ENCODE measurements at regions of chr1 and their contacts with region 1.

Region 1: GRCh38 chr1:181105134-181106021 is 16.9 kb downstream of the IER5 start:
- DNase-seq: peak; percentile 80 to 96 (median 94)
- ATAC-seq: peak; percentile 85
- H3K4me3 ChIP-seq: peak overlapping the region; percentile 61 to 76
- H3K4me3 Mint-ChIP-seq: peak overlapping the region; percentile 90
- H3K27ac ChIP-seq: peak overlapping the region; percentile 52 to 74
- H3K27ac Mint-ChIP-seq: peak overlapping the region; percentile 91
- H3K4me1 ChIP-seq: peaks cover 25% of the 10 kb centered on the region
- H3K4me1 Mint-ChIP-seq: peaks cover 40% of the 10 kb centered on the region
- H3K27me3 ChIP-seq: no peaks in the 10 kb centered on the region
- H3K27me3 Mint-ChIP-seq: no peaks in the 10 kb centered on the region
- CTCF ChIP-seq: no peak

Region 2: GRCh38 chr1:179954493-179955297 is 1150.7 kb before region 1 on chr1 and contains the start of gene CEP350:
- CTCF ChIA-PET with region 1: no interaction called
- POLR2A ChIA-PET with region 1: no interaction called
- intact Hi-C with region 1: loop called in 1 of 2 experiments (anchors 10 kb)
- DNase-seq: peak; percentile 94 to 100 (median 97)
- ATAC-seq: peak; percentile 86
- H3K4me3 ChIP-seq: peak within 1 kb of the TSS; percentile 69 to 85
- H3K4me3 Mint-ChIP-seq: peak within 1 kb of the TSS; percentile 85
- H3K27ac ChIP-seq: peak within 1 kb of the TSS; percentile 77 to 88
- H3K27ac Mint-ChIP-seq: peak within 1 kb of the TSS; percentile 95
- H3K4me1 ChIP-seq: peaks cover 35% of the 10 kb centered on the region
- H3K4me1 Mint-ChIP-seq: peaks cover 59% of the 10 kb centered on the region
- H3K27me3 ChIP-seq: no peaks in the 10 kb centered on the region
- H3K27me3 Mint-ChIP-seq: no peaks in the 10 kb centered on the region
- CTCF ChIP-seq: no peak
- total RNA-seq, gene CEP350: 37.6 to 42.7 TPM

Region 3: DNA sequence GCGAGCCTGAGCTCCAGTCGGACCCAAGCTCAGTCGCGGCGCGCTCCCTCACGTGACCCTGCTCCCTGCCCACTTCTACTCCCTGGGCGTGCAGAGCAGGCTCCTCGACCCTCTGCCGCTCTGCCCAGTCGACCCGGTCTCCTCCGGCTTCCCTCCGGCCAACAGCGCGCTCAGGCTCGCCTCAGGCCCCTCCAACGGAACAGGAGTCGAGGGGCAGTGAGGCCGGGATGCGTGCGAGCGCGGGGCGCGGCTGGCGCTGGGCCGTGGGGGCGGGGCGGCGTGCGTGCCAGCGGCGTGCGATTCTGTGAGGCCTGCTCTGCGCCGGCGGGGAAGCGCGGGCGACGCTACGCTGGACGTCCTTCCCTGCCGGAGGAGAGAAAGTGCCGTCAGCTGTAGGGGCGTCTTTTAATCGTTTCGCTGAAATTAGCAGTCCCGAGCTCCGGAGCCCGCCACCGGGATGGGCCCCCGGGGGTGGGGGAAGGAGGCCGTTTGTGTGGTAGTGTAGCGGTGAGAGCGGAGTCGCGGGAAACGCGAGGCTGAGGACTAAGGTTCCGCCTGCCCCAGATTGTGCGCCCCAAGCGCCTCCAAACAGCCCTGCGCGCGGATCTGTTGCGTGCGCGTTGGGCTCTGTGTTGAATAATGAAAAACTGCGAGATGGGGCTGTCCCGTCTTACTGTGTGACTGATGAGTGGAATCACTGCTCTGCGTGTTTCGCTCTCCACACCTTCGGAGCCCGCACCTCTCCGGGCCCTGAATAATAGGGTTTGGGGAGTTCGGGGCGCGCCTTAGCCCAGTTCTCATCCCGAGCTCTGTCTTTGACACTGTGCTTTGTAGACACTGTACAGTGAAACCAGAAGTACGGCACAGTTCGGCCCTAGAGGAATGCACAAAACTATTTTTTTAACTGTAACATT is 602.8 kb before region 1 on chr1 and contains the start of gene ACBD6:
- CTCF ChIA-PET with region 1: no interaction called
- POLR2A ChIA-PET with region 1: no interaction called
- intact Hi-C with region 1: loop called in 1 of 2 experiments (anchors 5 kb)
- DNase-seq: peak; percentile 73 to 92 (median 84)
- ATAC-seq: peak; percentile 89
- H3K4me3 ChIP-seq: peak within 1 kb of the TSS; percentile 96 to 97
- H3K4me3 Mint-ChIP-seq: peak within 1 kb of the TSS; percentile 96
- H3K27ac ChIP-seq: peak within 1 kb of the TSS; percentile 75 to 76
- H3K27ac Mint-ChIP-seq: peak within 1 kb of the TSS; percentile 98
- H3K4me1 ChIP-seq: peaks cover 27% of the 10 kb centered on the region
- H3K4me1 Mint-ChIP-seq: peaks cover 47% of the 10 kb centered on the region
- H3K27me3 ChIP-seq: no peaks in the 10 kb centered on the region
- H3K27me3 Mint-ChIP-seq: no peaks in the 10 kb centered on the region
- CTCF ChIP-seq: no peak
- total RNA-seq, gene ACBD6: 23.4 to 24.6 TPM

Region 4: DNA sequence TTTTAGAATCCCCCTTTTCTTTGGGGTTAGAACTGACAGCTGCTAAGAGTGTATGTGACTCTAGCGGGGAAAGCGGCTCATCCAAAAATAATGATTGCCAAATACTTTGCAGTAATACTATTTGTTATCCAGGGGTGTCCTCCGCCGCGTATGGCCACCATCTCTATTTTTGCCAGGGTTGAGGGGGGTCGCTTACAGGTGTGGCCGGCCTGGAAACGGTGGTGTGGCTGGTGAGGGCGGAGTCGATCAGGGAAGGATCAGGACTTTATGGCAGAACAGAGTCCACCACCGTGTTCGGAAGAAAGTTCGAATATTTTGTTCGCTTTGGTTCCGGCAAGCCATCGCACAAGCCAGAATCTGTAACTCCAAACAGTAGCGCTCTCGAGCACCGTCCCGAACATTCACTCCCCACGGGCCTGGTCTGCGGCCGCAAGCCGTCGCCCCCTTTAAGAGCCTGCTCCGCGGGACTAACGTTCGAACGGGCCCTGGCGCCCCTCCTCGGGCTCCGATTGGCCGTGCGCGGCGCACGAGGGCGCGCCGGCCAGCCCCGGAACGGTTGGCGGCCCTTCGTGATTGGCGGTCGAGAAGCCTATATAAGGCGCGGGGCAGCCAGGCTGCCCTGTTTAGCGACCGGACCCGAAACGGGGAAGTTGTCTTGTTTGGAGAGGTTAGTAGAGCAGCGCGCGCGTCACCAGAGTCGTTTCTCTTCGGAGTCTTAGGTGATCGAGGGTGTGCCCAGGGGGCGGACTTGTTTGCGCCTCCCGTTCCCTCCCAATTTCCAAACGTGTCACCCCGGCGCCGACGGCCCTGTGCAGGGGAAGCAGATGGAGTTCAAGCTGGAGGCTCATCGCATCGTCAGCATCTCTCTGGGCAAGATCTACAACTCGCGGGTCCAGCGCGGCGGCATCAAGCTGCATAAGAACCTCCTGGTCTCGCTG is 17.0 kb before region 1 on chr1 and contains the start of gene IER5:
- CTCF ChIA-PET with region 1: interaction called, 57 read pairs
- POLR2A ChIA-PET with region 1: interaction called, 143 read pairs
- intact Hi-C with region 1: loop called (anchors 1 kb)
- DNase-seq: peak; percentile 93 to 97 (median 95)
- ATAC-seq: peak; percentile 71
- H3K4me3 ChIP-seq: peak within 1 kb of the TSS; percentile 70 to 97
- H3K4me3 Mint-ChIP-seq: peak within 1 kb of the TSS; percentile 99
- H3K27ac ChIP-seq: peak within 1 kb of the TSS; percentile 89 to 99
- H3K27ac Mint-ChIP-seq: peak within 1 kb of the TSS; percentile 99
- H3K4me1 ChIP-seq: peaks cover 20% of the 10 kb centered on the region
- H3K4me1 Mint-ChIP-seq: peaks cover 44% of the 10 kb centered on the region
- H3K27me3 ChIP-seq: no peaks in the 10 kb centered on the region
- H3K27me3 Mint-ChIP-seq: no peaks in the 10 kb centered on the region
- CTCF ChIP-seq: no peak
- total RNA-seq, gene IER5: 74.7 to 76.6 TPM

Region 5: DNA sequence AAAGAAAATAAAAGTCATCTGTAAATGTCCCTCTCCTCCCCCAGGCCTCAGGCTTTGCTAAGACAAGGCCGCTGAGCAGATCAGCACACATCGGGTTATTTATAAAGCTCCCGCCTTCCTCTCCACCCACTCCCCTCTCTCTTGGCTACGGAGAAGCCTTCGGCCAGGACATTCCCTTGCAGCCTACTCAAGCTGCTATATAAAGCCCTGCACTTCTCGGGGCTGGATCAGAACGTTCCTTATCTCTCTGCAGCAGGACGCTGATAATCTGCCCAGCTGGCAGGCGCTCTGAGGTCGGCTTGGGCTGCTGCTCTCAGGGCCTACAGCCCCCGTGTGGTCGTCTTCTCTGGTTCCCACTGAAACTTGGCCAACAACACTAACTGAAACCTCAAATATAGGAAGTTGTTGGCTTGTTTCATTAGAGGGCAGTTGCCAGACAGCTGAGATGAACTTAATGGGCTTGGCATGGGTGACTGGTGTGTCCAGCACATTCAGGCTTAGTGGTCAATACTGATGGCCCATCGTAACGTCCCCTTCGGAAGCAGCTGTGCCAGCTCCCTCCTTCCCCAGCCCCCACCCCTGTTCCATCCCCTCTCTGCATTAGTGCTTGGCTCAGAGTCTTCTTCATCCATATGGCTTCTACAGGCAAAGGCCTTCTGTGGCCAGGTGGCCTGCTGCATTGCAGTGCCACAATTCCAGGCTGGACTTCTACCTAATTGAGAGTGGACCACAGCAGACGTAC is 47.7 kb after region 1 on chr1:
- CTCF ChIA-PET with region 1: no interaction called
- POLR2A ChIA-PET with region 1: interaction called, 16 read pairs
- intact Hi-C with region 1: no loop called
- DNase-seq: peak in 1 of 9 experiments; percentile 22
- ATAC-seq: no peak
- H3K4me3 ChIP-seq: no peak overlapping the region
- H3K4me3 Mint-ChIP-seq: no peak overlapping the region
- H3K27ac ChIP-seq: no peak overlapping the region
- H3K27ac Mint-ChIP-seq: no peak overlapping the region
- H3K4me1 ChIP-seq: peaks cover 49% of the 10 kb centered on the region
- H3K4me1 Mint-ChIP-seq: peaks cover 48% of the 10 kb centered on the region
- H3K27me3 ChIP-seq: no peaks in the 10 kb centered on the region
- H3K27me3 Mint-ChIP-seq: no peaks in the 10 kb centered on the region
- CTCF ChIP-seq: no peak

Region 6: GRCh38 chr1:181397845-181398244 is 292.5 kb after region 1 on chr1:
- CTCF ChIA-PET with region 1: no interaction called
- POLR2A ChIA-PET with region 1: no interaction called
- intact Hi-C with region 1: loop called in 1 of 2 experiments (anchors 2 kb)
- DNase-seq: peak in 6 of 9 experiments; percentile 11 to 67 (median 40)
- ATAC-seq: peak; percentile 19
- H3K4me3 ChIP-seq: peak overlapping the region in 1 of 2 experiments; percentile 14
- H3K4me3 Mint-ChIP-seq: peak overlapping the region; percentile 63
- H3K27ac ChIP-seq: peak overlapping the region; percentile 36 to 52
- H3K27ac Mint-ChIP-seq: no peak overlapping the region
- H3K4me1 ChIP-seq: peaks cover 83% of the 10 kb centered on the region
- H3K4me1 Mint-ChIP-seq: peaks cover 38% of the 10 kb centered on the region
- H3K27me3 ChIP-seq: no peaks in the 10 kb centered on the region
- H3K27me3 Mint-ChIP-seq: no peaks in the 10 kb centered on the region
- CTCF ChIP-seq: no peak

Region 7: GRCh38 chr1:181577475-181577874 is 472.1 kb after region 1 on chr1:
- CTCF ChIA-PET with region 1: no interaction called
- POLR2A ChIA-PET with region 1: no interaction called
- intact Hi-C with region 1: no loop called
- DNase-seq: no peak
- ATAC-seq: no peak
- H3K4me3 ChIP-seq: no peak overlapping the region
- H3K4me3 Mint-ChIP-seq: no peak overlapping the region
- H3K27ac ChIP-seq: no peak overlapping the region
- H3K27ac Mint-ChIP-seq: no peak overlapping the region
- H3K4me1 ChIP-seq: no peaks in the 10 kb centered on the region
- H3K4me1 Mint-ChIP-seq: no peaks in the 10 kb centered on the region
- H3K27me3 ChIP-seq: no peaks in the 10 kb centered on the region
- H3K27me3 Mint-ChIP-seq: peaks cover 27% of the 10 kb centered on the region
- CTCF ChIP-seq: no peak

Region 8: DNA sequence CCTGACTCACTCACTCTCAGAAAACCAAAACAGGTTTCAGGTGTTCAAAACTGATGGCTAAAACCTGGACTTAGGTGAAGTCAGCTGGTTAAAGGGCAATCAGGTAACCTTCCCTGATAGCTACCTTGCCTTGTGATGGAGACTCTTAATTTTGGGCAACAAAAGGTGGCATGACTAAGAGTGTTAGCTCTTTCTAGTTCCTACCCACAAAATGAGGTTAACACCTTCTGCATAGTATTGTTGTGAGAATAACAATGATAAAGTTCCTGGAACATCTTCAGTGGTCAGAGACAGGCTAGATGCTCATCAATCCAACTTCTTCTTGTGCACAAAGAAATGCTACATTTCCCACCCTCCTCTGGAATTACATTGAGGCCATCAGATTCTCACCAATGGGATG is 741.3 kb after region 1 on chr1:
- CTCF ChIA-PET with region 1: no interaction called
- POLR2A ChIA-PET with region 1: no interaction called
- intact Hi-C with region 1: no loop called
- DNase-seq: no peak
- ATAC-seq: no peak
- H3K4me3 ChIP-seq: no peak overlapping the region
- H3K4me3 Mint-ChIP-seq: no peak overlapping the region
- H3K27ac ChIP-seq: no peak overlapping the region
- H3K27ac Mint-ChIP-seq: no peak overlapping the region
- H3K4me1 ChIP-seq: no peaks in the 10 kb centered on the region
- H3K4me1 Mint-ChIP-seq: no peaks in the 10 kb centered on the region
- H3K27me3 ChIP-seq: no peaks in the 10 kb centered on the region
- H3K27me3 Mint-ChIP-seq: peaks cover 18% of the 10 kb centered on the region
- CTCF ChIP-seq: no peak